Heart right ventricle (tissue), 16 donors: ENCODE measurements at regions of chr1 and their contacts with region 1.

Region 1: DNA sequence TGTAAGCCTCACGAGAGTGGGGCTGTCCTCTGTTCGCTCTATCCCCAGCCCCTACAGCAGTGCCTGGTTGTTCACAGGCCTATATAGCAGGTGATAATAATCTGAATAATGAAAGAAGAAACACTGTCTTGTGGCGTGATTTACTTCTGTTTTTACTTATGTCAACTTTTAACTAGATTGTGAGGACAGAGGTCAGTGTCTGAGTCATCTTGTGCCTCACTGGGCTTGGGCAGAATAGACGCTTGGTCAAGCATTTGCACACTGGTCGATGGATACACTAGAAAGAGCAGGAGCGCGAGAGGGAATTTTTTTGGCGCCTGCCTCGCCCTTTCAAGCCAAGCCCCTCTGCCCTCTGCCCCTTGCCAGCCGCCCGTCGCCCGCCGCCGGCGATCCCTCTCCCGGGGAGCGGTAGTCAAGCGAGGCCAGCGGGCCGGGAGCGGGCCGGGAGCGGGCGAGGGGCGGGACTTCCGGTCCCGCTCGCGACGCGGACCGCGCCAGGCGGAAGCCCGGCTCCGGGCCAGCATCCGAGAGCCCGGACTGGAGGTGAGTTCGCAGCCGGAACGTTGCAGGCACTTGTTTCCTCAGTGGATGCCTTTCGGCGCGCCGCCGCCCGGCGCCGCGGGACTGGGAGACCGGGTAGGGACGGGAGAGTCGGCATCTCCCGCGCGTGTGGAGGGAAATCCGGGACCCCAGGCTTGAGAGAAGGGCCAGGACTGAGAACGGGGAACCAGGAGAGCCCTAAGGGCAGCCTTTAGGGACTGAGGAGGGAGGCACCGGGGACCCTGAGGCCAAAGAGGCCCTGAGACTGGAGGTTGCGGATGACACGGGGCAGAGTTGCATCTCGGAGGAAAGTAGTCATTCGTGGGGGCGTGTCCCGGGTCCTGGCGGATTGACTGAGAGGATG is at the start of gene DISP1:
- DNase-seq: peak; percentile 81 to 88
- ATAC-seq: peak; percentile 95 to 99 (median 98)
- H3K4me3 ChIP-seq: peak within 1 kb of the TSS; percentile 64 to 95 (median 86)
- H3K27ac ChIP-seq: peak within 1 kb of the TSS; percentile 32 to 94 (median 90)
- H3K4me1 ChIP-seq: peaks cover 3 to 44% (median 21%) of the 10 kb centered on the region in 9 donors
- H3K27me3 ChIP-seq: no peaks in the 10 kb centered on the region
- CTCF ChIP-seq: peak in 1 of 9 donors; percentile 10
- total RNA-seq, gene DISP1: 3.3 to 7.5 (median 5.7) TPM

Region 2: DNA sequence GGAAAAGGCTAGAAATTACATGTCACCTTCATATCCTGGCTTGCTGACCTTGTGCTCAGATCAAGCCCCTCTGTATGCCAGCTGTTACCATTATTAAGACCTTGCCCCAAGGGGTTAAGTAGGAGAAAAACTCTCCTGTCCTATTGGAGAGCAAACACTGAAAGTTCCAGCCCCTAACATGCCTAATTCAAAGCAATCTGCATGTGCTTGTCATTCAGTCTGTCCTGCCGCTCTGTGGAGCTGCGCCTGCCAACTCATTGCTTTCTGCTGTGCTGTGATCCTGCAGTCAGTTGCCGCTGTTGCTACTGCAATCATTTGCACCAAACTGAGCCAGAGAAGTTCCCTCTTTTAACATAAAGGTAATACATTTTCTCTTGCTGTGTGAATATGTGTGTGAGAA is 113.4 kb after region 1 on chr1:
- intact Hi-C with region 1: loop called in 4 of 10 experiments (anchors 5 to 10 kb)
- DNase-seq: peak; percentile 53 to 65
- ATAC-seq: peak; percentile 94 to 99 (median 96)
- H3K4me3 ChIP-seq: peak overlapping the region; percentile 11 to 54 (median 42)
- H3K27ac ChIP-seq: peak overlapping the region in 7 of 10 donors; percentile 5 to 68 (median 47)
- H3K4me1 ChIP-seq: peaks cover 0 to 76% (median 27%) of the 10 kb centered on the region in 9 donors
- H3K27me3 ChIP-seq: no peaks in the 10 kb centered on the region
- CTCF ChIP-seq: peak in 3 of 9 donors; percentile 33 to 39 (median 37)

Region 3: DNA sequence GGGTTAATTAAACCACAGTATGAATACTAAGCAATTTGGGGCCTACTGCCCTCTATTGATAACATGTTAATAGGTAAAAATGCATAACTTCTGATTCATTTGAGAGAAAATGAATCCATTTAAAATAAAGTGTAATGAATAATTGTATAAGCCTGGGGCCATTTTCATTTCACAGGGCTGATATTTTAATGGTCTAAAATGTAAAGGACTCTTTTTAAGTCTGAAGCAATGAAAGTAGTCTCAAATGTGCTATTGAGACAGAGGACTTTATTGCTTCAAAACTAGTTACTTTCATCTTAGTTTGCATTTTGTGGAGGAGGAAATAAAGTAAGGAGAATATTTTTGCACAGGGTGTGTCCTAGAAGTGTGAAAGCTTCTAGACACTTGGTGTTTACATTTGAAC is 172.9 kb after region 1 on chr1:
- intact Hi-C with region 1: loop called in 2 of 10 experiments (anchors 10 kb)
- DNase-seq: no peak
- ATAC-seq: no peak
- H3K4me3 ChIP-seq: no peak overlapping the region
- H3K27ac ChIP-seq: peak overlapping the region in 1 of 10 donors; percentile 15
- H3K4me1 ChIP-seq: peaks cover 0 to 6% (median 0%) of the 10 kb centered on the region in 9 donors
- H3K27me3 ChIP-seq: no peaks in the 10 kb centered on the region
- CTCF ChIP-seq: peak in 2 of 9 donors; percentile 7 to 19

Region 4: GRCh38 chr1:222994506-222995235 is 179.9 kb after region 1 on chr1:
- intact Hi-C with region 1: loop called in 2 of 10 experiments (anchors 10 kb)
- DNase-seq: no peak
- ATAC-seq: peak in 3 of 8 donors; percentile 21 to 51 (median 33)
- H3K4me3 ChIP-seq: no peak overlapping the region
- H3K27ac ChIP-seq: peak overlapping the region in 7 of 10 donors; percentile 21 to 70 (median 62)
- H3K4me1 ChIP-seq: peaks cover 3 to 38% (median 34%) of the 10 kb centered on the region in 9 donors
- H3K27me3 ChIP-seq: no peaks in the 10 kb centered on the region
- CTCF ChIP-seq: no peak